SK-MEL-5 (cell line): ENCODE measurements at regions of chr20 and their contacts with region 1.

Region 1: GRCh38 chr20:62182613-62183425 is at the start of gene MTG2:
- DNase-seq: peak; percentile 97
- total RNA-seq, gene MTG2: 27.1 and 29.6 TPM in 2 replicates

Region 2: GRCh38 chr20:62276439-62276838 is 93.6 kb after region 1 on chr20:
- in situ Hi-C with region 1: loop called (anchors 25 kb)
- DNase-seq: no peak